ENCODE measurements at regions of chr7 and their contacts with region 1.

Region 1: DNA sequence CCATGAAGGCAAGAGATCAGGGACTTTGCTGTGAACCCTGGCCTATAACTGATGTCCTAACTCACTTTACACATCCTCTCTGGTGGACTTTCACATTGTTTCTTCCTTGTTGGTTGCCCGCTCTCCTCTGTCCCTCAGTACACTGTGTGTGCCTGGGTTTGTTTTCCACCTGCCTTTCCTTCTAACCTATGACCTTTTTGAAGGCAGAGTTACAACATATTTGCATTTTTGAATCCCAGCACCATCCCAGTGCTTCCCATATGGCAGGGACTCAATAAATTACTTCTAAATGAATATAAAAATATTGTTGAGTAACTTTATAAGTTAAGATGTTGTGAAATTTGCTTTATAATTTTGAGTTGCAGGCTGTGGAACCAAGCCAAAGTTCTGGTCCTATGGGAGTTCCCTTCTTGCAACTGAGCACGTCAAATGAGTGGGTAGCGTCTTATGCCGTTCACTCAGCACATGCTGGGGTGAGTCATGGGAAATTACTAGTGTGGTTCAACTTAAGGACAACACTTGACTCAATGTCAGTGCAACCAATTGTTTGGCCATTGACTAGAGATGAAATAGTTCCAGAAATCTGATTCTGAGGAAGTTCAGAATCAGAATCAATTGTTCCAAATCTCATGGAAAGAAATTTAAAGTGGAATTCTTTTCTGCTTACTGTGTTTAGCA is 250.9 kb downstream of the TWIST1 start:
- DNase-seq: peak in 1 of 9 donors; percentile 25
- ATAC-seq: no peak
- H3K4me3 ChIP-seq: no peak overlapping the region
- H3K4me3 Mint-ChIP-seq: no peak overlapping the region
- H3K27ac ChIP-seq: no peak overlapping the region
- H3K27ac Mint-ChIP-seq: no peak overlapping the region
- H3K4me1 ChIP-seq: no peaks in the 10 kb centered on the region
- H3K4me1 Mint-ChIP-seq: peaks cover 0 to 6% (median 0%) of the 10 kb centered on the region in 7 donors
- H3K27me3 ChIP-seq: no peaks in the 10 kb centered on the region
- H3K27me3 Mint-ChIP-seq: no peaks in the 10 kb centered on the region

Region 2: GRCh38 chr7:18638594-18639452 is 227.7 kb before region 1 on chr7:
- CTCF ChIA-PET with region 1: no interaction called
- POLR2A ChIA-PET with region 1: no interaction called
- intact Hi-C with region 1: loop called in 1 of 2 experiments (anchors 5 kb)
- DNase-seq: no peak
- ATAC-seq: peak; percentile 71
- H3K4me3 ChIP-seq: no peak overlapping the region
- H3K4me3 Mint-ChIP-seq: no peak overlapping the region
- H3K27ac ChIP-seq: no peak overlapping the region
- H3K27ac Mint-ChIP-seq: peak overlapping the region in 1 of 9 donors; percentile 83
- H3K4me1 ChIP-seq: no peaks in the 10 kb centered on the region
- H3K4me1 Mint-ChIP-seq: peaks cover 0 to 13% (median 0%) of the 10 kb centered on the region in 7 donors
- H3K27me3 ChIP-seq: no peaks in the 10 kb centered on the region
- H3K27me3 Mint-ChIP-seq: no peaks in the 10 kb centered on the region

Region 3: GRCh38 chr7:18740579-18740988 is 125.9 kb before region 1 on chr7:
- CTCF ChIA-PET with region 1: no interaction called
- POLR2A ChIA-PET with region 1: no interaction called
- intact Hi-C with region 1: loop called in 1 of 2 experiments (anchors 10 kb)
- DNase-seq: no peak
- ATAC-seq: no peak
- H3K4me3 ChIP-seq: no peak overlapping the region
- H3K4me3 Mint-ChIP-seq: no peak overlapping the region
- H3K27ac ChIP-seq: no peak overlapping the region
- H3K27ac Mint-ChIP-seq: peak overlapping the region in 1 of 9 donors; percentile 41
- H3K4me1 ChIP-seq: no peaks in the 10 kb centered on the region
- H3K4me1 Mint-ChIP-seq: peaks cover 0 to 8% (median 0%) of the 10 kb centered on the region in 7 donors
- H3K27me3 ChIP-seq: peaks cover 0 to 2% of the 10 kb centered on the region in 2 donors
- H3K27me3 Mint-ChIP-seq: no peaks in the 10 kb centered on the region

Region 4: GRCh38 chr7:19248681-19249080 is 382.2 kb after region 1 on chr7:
- CTCF ChIA-PET with region 1: no interaction called
- POLR2A ChIA-PET with region 1: no interaction called
- intact Hi-C with region 1: no loop called
- DNase-seq: no peak
- ATAC-seq: no peak
- H3K4me3 ChIP-seq: no peak overlapping the region
- H3K4me3 Mint-ChIP-seq: no peak overlapping the region
- H3K27ac ChIP-seq: no peak overlapping the region
- H3K27ac Mint-ChIP-seq: no peak overlapping the region
- H3K4me1 ChIP-seq: no peaks in the 10 kb centered on the region
- H3K4me1 Mint-ChIP-seq: no peaks in the 10 kb centered on the region
- H3K27me3 ChIP-seq: no peaks in the 10 kb centered on the region
- H3K27me3 Mint-ChIP-seq: no peaks in the 10 kb centered on the region